SK-N-SH (cell line): ENCODE measurements at regions of chr17 and their contacts with region 1.

Region 1: DNA sequence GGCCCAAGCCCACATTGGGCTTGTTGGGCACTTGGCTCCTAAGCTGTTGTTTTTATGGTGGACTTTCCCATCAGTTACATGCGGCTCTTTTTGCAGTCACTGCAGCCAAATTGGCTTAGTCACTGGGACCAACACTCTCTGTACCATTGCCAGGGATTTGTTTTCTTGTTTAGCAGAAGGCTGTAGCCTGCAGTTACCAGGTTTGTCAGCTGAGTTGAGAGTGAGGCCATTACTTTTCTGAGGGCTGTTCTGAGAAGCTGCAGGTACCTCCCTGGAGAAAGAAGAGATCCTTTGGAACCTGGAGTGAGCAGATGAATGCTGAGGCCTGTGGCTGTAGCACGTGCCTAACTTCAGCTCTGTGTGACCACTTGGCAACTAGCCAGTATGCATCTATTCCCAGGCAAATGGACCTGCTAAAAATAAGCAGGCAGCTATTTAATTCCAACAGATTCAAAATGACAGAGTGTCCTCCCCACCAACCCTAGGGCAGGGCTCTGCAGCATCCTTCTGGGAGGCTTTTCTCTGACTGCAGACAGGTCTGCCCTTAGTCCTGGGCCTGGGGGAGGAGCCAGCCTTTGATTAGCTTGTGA is 12.9 kb downstream of the AKAP1 start:
- DNase-seq: peak; percentile 77
- H3K4me3 ChIP-seq: no peak overlapping the region
- H3K27ac ChIP-seq: peak overlapping the region; percentile 37 to 70
- H3K4me1 ChIP-seq: peaks cover 4 to 21% of the 10 kb centered on the region in 2 experiments; a peak in 1 of 4 replicates
- H3K27me3 ChIP-seq: no peaks in the 10 kb centered on the region
- CTCF ChIP-seq: no peak
- EP300 ChIP-seq: peak in 1 of 2 experiments; percentile 52; a peak in 1 of 4 replicates
- RAD21 ChIP-seq: no peak

Region 2: DNA sequence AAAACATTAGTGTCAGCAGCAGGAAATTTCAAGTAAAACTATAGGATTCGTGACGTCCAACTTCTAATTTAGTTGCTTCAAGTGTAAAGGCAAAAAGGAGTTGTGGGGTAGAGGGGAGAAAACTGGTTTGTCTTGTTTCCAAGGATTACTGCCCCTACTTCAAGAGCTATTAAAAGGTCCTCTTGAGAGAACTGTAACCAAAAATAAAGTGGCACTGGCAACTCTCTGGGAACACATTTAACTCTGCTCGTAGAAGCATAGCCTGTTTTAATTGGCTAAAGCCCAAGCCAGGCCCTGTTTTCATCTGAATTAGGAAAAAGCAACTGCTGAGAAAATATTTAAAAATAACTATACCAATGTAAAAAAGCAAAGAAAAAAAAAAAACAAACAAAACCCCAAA is 64.6 kb before region 1 on chr17:
- CTCF ChIA-PET with region 1: no interaction called
- POLR2A ChIA-PET with region 1: no interaction called
- DNase-seq: no peak
- H3K4me3 ChIP-seq: no peak overlapping the region
- H3K27ac ChIP-seq: no peak overlapping the region
- H3K4me1 ChIP-seq: no peaks in the 10 kb centered on the region
- H3K27me3 ChIP-seq: peaks cover 5% of the 10 kb centered on the region
- CTCF ChIP-seq: no peak
- EP300 ChIP-seq: no peak
- RAD21 ChIP-seq: no peak

Region 3: DNA sequence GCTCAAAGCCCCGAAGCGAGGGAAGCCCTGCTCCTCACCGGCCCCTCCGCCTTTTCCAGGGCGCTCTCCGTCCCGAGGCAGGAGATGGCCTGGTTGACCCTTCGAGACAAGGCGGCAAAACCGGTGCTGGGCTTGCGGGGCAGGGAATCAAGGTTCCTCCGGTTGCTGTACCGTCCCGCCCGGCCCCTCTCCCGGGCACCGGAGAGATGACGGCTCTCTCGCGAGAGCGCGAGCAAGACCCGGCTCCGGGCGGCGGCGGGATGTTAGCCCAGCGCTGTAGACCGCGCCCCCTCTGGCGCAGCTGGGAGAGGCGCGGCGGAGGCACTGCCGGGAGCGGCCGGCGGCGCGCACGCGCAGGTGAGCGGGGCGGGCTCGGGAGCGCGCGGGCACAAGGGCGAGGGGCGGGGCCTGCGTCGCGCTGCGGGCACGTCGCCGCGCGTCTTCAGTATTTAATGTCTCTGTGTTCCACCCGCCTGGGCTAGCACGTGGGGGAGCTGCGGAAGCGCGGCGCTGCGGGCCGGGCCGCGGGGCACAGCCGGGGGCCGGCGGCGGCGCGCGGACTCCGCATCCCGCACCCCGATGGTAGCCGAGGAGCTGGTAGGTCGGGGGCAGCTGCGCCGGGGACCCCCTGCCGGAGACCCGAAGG is 13.0 kb before region 1 on chr17 and contains the start of gene AKAP1:
- CTCF ChIA-PET with region 1: interaction called, 13 read pairs
- POLR2A ChIA-PET with region 1: interaction called, 15 read pairs
- DNase-seq: peak; percentile 100
- H3K4me3 ChIP-seq: peak within 1 kb of the TSS; percentile 87 to 97
- H3K27ac ChIP-seq: peak within 1 kb of the TSS; percentile 94 to 98
- H3K4me1 ChIP-seq: peaks cover 0 to 12% of the 10 kb centered on the region in 2 experiments; a peak in 2 of 4 replicates
- H3K27me3 ChIP-seq: no peaks in the 10 kb centered on the region
- CTCF ChIP-seq: no peak
- EP300 ChIP-seq: no peak
- RAD21 ChIP-seq: no peak
- polyA plus RNA-seq, gene AKAP1: 23.7 and 36.3 TPM in 2 replicates